Heart left ventricle (tissue), 16 donors: ENCODE measurements at regions of chr1 and their contacts with region 1.

Region 1: DNA sequence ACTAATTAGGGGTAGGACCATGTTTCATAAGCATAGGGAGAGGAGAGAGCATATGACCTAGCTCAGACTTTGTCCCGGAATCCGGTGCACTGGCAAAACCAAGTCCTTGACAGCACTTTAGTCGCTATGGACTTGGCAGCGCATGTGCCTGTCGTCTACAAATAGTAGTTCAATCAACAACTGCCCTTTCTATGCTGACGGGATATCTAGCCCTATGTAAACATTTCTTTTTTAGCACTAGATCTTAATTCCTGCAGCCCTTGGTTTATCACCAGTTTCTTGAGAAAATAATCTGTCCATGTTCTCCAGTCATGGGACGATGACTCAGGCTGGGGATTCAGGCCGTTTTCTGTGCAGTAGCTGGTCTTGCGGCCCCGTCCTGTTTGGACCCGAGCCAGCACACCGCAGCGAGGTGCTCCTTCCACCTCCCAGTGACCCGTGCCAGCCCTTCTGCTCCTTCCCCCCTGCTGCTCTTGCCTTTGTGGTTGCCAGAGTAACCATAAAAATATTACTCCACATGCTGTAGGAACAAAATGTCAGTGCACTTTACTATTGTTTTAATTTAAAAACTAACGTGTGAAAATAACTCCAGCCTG is 8.6 kb upstream of the MT1HL1 start:
- DNase-seq: peak; percentile 71 to 92 (median 80)
- ATAC-seq: peak; percentile 92 to 96 (median 94)
- H3K4me3 ChIP-seq: peak overlapping the region in 6 of 12 donors; percentile 13 to 26 (median 17)
- H3K27ac ChIP-seq: peak overlapping the region; percentile 70 to 94 (median 89)
- H3K4me1 ChIP-seq: peaks cover 0 to 36% (median 10%) of the 10 kb centered on the region in 12 donors
- H3K27me3 ChIP-seq: no peaks in the 10 kb centered on the region
- CTCF ChIP-seq: no peak
- POLR2A ChIP-seq: peak in 1 of 2 donors; percentile 24

Region 2: GRCh38 chr1:236997882-236998281 is 15.0 kb before region 1 on chr1:
- intact Hi-C with region 1: loop called in 1 of 10 experiments (anchors 1 kb)
- DNase-seq: peak; percentile 67 to 89 (median 74)
- ATAC-seq: peak; percentile 88 to 91 (median 90)
- H3K4me3 ChIP-seq: peak overlapping the region in 11 of 12 donors; percentile 7 to 47 (median 35)
- H3K27ac ChIP-seq: peak overlapping the region; percentile 76 to 99 (median 93)
- H3K4me1 ChIP-seq: peaks cover 0 to 25% (median 0%) of the 10 kb centered on the region in 12 donors
- H3K27me3 ChIP-seq: no peaks in the 10 kb centered on the region
- CTCF ChIP-seq: peak in 4 of 12 donors; percentile 2 to 28 (median 16)
- POLR2A ChIP-seq: peak in 1 of 2 donors; percentile 57